ENCODE measurements at regions of chr9 and their contacts with region 1.

Region 1: GRCh38 chr9:15142878-15143534 is 164.0 kb downstream of the TTC39B start:
- DNase-seq: peak in 1 of 2 experiments; percentile 46
- H3K4me3 ChIP-seq: no peak overlapping the region
- H3K27ac ChIP-seq: no peak overlapping the region
- H3K4me1 ChIP-seq: peaks cover 16% of the 10 kb centered on the region
- H3K27me3 ChIP-seq: no peaks in the 10 kb centered on the region
- CTCF ChIP-seq: peak; percentile 76

Region 2: GRCh38 chr9:14868772-14869583 is 274.0 kb before region 1 on chr9:
- CTCF ChIA-PET with region 1: no interaction called
- POLR2A ChIA-PET with region 1: no interaction called
- intact Hi-C with region 1: no loop called
- DNase-seq: no peak
- H3K4me3 ChIP-seq: no peak overlapping the region
- H3K27ac ChIP-seq: no peak overlapping the region
- H3K4me1 ChIP-seq: no peaks in the 10 kb centered on the region
- H3K27me3 ChIP-seq: no peaks in the 10 kb centered on the region
- CTCF ChIP-seq: no peak

Region 3: GRCh38 chr9:15104826-15105420 is 38.1 kb before region 1 on chr9:
- CTCF ChIA-PET with region 1: no interaction called
- POLR2A ChIA-PET with region 1: no interaction called
- intact Hi-C with region 1: loop called (anchors 5 kb)
- DNase-seq: peak in 1 of 2 experiments; percentile 12
- H3K4me3 ChIP-seq: no peak overlapping the region
- H3K27ac ChIP-seq: no peak overlapping the region
- H3K4me1 ChIP-seq: no peaks in the 10 kb centered on the region
- H3K27me3 ChIP-seq: no peaks in the 10 kb centered on the region
- CTCF ChIP-seq: peak; percentile 68